ENCODE measurements at regions of chr12 and their contacts with region 1.

Region 1: DNA sequence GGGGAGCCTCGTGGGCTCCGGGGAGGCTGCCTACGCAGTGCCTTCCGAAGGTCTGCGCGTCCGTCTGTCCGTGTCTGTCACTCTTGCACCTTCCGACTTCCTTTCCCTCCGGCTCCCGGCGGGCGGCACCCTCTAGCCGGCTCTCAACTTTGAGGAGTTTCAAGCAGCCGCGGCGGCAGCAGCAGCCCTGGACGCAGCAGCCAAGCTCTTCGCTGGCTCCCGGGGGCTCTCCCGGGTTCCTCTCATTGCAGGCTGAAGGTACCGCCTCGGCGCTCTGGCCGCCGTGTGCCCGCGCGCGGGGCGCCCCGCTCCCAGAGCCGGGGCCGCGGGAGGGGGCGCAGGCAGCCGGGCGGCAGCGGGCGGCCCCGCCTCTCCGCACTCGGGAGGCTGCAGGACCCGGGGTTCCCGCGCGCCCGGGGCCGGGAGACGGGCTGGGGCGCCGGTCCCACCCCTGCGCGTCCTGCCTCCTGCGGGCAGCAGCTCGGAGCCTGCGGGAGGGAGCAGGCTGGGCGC is at the starts of genes AMIGO2 and PCED1B:
- DNase-seq: peak; percentile 13 to 81 (median 69)
- ATAC-seq: peak; percentile 54
- H3K4me3 ChIP-seq: peak within 1 kb of the TSS; percentile 85 to 92
- H3K4me3 Mint-ChIP-seq: peak within 1 kb of the TSS; percentile 98
- H3K27ac ChIP-seq: peak within 1 kb of the TSS; percentile 63 to 85
- H3K27ac Mint-ChIP-seq: peak within 1 kb of the TSS; percentile 96
- H3K4me1 ChIP-seq: peaks cover 55% of the 10 kb centered on the region
- H3K4me1 Mint-ChIP-seq: peaks cover 76% of the 10 kb centered on the region
- H3K27me3 ChIP-seq: no peaks in the 10 kb centered on the region
- H3K27me3 Mint-ChIP-seq: no peaks in the 10 kb centered on the region
- CTCF ChIP-seq: no peak
- total RNA-seq, gene AMIGO2: 12.5 to 13.5 TPM
- total RNA-seq, gene PCED1B: 32.9 to 33.7 TPM

Region 2: DNA sequence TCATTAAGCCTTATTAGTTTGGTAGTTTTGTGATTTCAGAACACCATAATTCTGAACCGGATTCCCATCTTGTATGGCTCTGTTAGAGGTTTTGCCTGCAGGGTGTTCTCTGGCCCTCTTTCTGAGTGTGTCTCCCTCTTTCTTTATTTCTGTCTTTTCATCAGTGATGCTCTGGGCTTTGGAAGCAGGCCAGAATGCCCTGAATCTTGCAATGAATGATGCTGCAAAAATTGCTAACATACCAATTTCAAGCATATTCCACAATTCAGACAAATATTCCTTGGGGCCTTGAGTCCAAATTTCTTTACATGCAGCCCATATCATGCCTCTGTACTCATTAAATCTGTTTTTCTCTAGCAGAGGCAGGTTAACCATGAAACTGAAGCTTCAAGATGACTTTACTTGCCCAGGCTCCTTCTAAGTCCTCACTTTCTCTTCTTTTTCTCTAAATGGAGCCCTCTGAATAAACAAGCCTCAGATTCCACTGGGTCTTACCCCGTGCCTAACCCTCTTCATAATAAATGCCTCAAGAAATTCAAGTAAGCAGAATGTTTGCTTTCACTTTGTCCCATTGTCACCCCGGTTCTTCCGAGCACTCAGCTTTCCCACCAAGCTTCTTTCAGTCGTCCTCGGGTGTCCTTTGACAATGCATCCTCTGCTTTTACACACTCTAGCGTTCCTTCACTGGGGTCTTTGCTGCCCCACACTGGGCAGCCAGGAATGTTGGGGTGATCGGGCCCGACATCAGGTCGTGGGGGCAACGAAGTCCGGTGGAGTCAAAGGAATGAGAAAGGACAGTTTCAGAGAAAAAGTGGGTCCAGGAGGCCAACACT is 174.9 kb before region 1 on chr12:
- CTCF ChIA-PET with region 1: no interaction called
- POLR2A ChIA-PET with region 1: no interaction called
- intact Hi-C with region 1: no loop called
- DNase-seq: no peak
- ATAC-seq: no peak
- H3K4me3 ChIP-seq: no peak overlapping the region
- H3K4me3 Mint-ChIP-seq: no peak overlapping the region
- H3K27ac ChIP-seq: no peak overlapping the region
- H3K27ac Mint-ChIP-seq: no peak overlapping the region
- H3K4me1 ChIP-seq: no peaks in the 10 kb centered on the region
- H3K4me1 Mint-ChIP-seq: peaks cover 13% of the 10 kb centered on the region
- H3K27me3 ChIP-seq: no peaks in the 10 kb centered on the region
- H3K27me3 Mint-ChIP-seq: no peaks in the 10 kb centered on the region
- CTCF ChIP-seq: no peak

Region 3: DNA sequence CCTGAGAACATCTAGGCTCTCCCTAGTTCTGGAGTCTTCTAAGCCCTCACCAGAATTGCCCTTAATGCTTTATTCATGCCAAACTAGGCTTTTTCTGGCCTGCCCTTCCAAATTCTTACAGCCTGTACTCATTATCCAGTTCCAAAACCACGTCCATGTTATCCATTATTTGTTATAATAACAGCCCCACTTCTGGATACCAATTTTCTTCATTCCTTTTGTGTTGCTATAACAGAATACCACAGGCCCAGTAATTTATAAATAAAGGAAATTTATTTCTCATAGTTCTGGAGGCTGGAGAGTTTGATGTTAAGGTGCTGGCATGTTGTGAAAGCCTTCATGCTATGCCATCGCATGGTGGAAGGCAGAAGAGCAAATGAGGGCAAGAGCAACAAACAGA is 68.2 kb after region 1 on chr12:
- CTCF ChIA-PET with region 1: no interaction called
- POLR2A ChIA-PET with region 1: no interaction called
- intact Hi-C with region 1: loop called in 1 of 2 experiments (anchors 5 kb)
- DNase-seq: no peak
- ATAC-seq: no peak
- H3K4me3 ChIP-seq: no peak overlapping the region
- H3K4me3 Mint-ChIP-seq: no peak overlapping the region
- H3K27ac ChIP-seq: no peak overlapping the region
- H3K27ac Mint-ChIP-seq: no peak overlapping the region
- H3K4me1 ChIP-seq: peaks cover 14% of the 10 kb centered on the region
- H3K4me1 Mint-ChIP-seq: peaks cover 32% of the 10 kb centered on the region
- H3K27me3 ChIP-seq: no peaks in the 10 kb centered on the region
- H3K27me3 Mint-ChIP-seq: no peaks in the 10 kb centered on the region
- CTCF ChIP-seq: no peak

Region 4: DNA sequence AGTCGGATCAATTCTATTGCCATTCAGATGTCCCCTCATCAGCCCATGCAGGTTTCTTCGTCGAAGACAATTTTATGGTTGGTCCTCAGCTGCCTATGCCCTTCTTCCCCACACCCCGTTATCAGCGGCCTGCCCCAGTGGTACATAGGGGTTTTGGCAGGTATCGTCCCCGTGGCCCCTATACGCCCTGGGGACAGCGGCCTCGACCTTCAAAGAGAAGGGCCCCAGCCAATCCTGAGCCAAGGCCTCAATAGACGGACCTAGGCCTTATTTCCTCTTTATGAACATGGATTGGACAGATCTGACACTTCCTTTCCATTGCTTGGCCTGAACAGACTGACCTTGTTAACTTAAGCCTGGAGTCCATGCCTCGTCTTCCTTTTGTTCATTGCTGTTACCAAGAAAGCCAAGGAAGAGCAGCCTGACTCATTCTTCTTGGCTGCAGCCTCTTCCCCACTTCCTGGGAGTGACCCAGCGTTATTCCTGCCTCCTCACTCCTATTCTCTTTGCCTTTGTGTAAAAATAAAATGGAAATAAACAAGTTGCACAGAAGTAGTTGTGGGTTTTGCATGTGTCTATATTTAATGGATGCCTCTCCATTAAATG is 156.7 kb after region 1 on chr12:
- CTCF ChIA-PET with region 1: no interaction called
- POLR2A ChIA-PET with region 1: no interaction called
- intact Hi-C with region 1: no loop called
- DNase-seq: no peak
- ATAC-seq: no peak
- H3K4me3 ChIP-seq: no peak overlapping the region
- H3K4me3 Mint-ChIP-seq: no peak overlapping the region
- H3K27ac ChIP-seq: no peak overlapping the region
- H3K27ac Mint-ChIP-seq: peak overlapping the region; percentile 73
- H3K4me1 ChIP-seq: peaks cover 44% of the 10 kb centered on the region
- H3K4me1 Mint-ChIP-seq: peaks cover 61% of the 10 kb centered on the region
- H3K27me3 ChIP-seq: no peaks in the 10 kb centered on the region
- H3K27me3 Mint-ChIP-seq: no peaks in the 10 kb centered on the region
- CTCF ChIP-seq: no peak

Region 5: GRCh38 chr12:47307680-47308399 is 228.3 kb after region 1 on chr12:
- CTCF ChIA-PET with region 1: interaction called, 7 read pairs
- POLR2A ChIA-PET with region 1: interaction called, 7 read pairs
- intact Hi-C with region 1: loop called (anchors 2 to 5 kb)
- DNase-seq: peak; percentile 21 to 81 (median 56)
- ATAC-seq: peak; percentile 91
- H3K4me3 ChIP-seq: peak overlapping the region; percentile 37 to 46
- H3K4me3 Mint-ChIP-seq: peak overlapping the region; percentile 81
- H3K27ac ChIP-seq: peak overlapping the region; percentile 21 to 25
- H3K27ac Mint-ChIP-seq: peak overlapping the region; percentile 88
- H3K4me1 ChIP-seq: peaks cover 12% of the 10 kb centered on the region
- H3K4me1 Mint-ChIP-seq: peaks cover 47% of the 10 kb centered on the region
- H3K27me3 ChIP-seq: no peaks in the 10 kb centered on the region
- H3K27me3 Mint-ChIP-seq: no peaks in the 10 kb centered on the region
- CTCF ChIP-seq: peak; percentile 60

Measured in CD8-positive, alpha-beta T cell (primary cell).